Cardiac septum (tissue), 1 donor: ENCODE measurements at regions of chr17 and their contacts with region 1.

Region 1: DNA sequence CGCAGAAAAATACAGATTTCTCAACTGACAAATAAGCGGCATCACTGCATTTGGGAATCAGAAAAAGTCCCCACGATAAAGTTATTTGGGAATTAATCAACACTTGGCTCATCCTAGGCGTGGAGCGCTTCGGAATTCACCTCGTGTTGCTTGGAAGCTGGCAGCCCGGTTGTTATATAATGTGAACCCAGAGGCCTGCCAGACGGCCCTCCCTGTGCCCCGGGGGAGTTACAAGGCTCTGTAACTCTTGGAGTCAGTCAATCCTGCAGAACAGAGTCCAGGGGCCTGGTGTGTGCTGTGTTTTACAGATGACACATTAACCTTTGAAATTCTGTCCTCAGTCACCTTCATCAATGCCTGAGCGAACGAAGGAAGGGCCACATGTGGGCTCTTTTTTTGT is 111.1 kb downstream of the PITPNC1 start:
- DNase-seq: no peak

Region 2: DNA sequence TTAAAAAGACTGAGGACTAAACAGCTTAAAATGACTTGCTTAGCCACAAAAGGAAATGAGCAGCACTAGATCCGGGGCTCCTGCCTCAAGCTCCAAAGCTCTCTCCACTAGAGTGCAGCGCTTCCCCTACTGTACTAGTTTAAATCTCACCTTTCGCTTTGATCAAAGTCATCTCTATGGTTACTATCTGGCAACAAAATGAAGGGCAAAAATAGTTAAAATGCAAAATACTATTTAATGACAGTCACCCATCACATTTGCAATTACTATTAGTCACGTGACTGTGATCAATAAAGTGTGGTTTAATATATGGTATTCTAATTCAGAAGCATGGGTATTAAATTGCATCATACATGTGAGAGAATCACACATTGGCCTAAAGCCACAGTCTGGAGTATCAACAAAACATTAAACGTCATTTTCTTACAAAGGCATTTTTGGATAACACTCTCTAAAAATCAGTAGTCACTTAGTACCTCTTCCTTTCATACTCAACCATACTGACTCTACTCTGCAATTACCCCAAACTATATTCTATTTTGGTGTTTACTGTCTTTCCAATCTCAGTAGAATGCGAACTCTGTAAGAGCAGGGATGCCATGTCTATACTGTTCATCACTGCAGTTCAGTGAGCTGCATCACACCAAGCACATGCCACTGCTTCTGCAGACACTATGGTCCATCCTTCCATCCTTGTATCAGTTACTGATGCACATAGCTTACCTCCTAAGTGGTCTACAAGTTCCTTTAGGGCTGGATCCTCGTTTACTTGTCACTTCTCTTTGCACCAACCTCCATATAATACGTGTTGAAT is 128.0 kb before region 1 on chr17:
- intact Hi-C with region 1: no loop called
- DNase-seq: no peak

Region 3: GRCh38 chr17:67431249-67432048 is 56.7 kb before region 1 on chr17:
- intact Hi-C with region 1: no loop called
- DNase-seq: no peak

Region 4: DNA sequence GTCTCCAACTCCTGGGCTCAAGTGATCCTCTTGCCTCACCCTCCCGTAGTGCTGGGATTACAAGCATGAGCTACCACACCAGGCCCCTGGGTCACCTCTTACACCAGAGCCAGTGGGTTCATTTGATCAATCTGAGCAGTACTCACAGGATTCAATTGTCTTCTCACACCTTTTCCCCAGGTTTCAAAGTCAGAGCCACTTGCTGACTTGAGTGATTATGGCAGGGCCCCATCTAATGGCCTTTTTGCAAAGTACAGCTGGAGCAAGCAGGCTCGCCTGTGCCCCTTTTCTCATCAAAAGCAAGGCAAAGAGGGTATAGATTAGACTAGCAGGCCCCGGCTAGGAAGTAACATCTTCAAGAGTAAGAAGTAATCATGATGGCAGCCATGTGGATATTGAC is 114.8 kb after region 1 on chr17:
- intact Hi-C with region 1: loop called (anchors 10 kb)
- DNase-seq: no peak

Region 5: DNA sequence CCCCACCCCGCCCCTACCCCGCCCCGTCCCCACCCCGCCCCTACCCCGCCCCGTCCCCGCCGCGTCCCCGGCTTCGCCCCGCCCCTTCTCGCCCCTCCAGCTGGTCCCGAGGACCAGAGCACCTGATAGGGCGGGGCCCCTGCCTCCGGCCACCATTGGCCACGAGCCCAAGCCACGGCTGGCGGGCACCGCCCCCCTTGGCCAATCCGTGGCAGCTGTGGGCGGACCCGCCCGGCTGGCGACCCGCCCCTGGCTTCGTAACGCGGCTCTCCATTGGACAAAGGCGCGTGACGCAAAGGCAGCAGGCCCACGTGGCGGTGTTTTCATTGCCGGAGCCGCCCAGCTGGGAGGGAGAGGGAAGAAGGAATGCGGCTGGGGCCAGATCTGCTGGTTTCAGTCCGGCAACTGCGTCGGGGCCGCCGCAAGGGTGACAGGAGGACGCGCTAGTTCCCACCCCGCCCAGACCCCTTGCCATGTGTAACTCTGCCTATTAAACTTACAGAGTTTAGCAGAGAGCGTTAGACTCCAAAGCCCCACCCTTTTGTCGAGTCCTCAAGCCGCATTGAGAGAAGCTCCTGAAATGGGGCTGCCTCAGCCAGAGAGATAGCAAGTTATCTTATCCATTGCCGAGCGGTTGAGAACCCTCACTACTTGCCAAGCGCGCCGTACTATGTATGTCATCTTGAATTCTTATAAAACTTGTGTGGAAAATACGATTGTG is 969.5 kb after region 1 on chr17:
- intact Hi-C with region 1: no loop called
- DNase-seq: peak; percentile 100